ENCODE measurements at regions of chr1 and their contacts with region 1.

Region 1: DNA sequence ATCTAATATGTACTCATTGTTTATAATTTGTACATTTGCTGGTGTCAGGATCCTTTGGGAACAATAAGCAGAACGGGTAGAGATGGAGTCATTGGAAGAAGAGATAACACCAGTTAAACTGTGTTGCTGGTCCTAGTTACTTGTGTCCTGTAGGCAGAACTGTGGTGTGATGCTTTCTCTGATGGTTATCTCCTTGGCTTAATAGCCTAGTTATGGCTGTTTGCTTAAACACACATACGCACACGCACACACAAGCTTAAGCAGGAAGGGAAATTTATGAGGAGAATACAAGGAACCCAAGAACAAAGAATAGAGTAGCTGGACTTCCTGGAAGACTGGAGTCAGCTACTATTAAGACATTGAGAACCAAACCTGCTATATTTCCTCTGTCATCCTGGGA is 5.7 kb upstream of the PKN2 start:
- DNase-seq: no peak
- H3K4me3 ChIP-seq: no peak overlapping the region
- H3K27ac ChIP-seq: no peak overlapping the region
- H3K4me1 ChIP-seq: peaks cover 4 to 13% (median 10%) of the 10 kb centered on the region in 4 experiments
- H3K27me3 ChIP-seq: no peaks in the 10 kb centered on the region

Region 2: DNA sequence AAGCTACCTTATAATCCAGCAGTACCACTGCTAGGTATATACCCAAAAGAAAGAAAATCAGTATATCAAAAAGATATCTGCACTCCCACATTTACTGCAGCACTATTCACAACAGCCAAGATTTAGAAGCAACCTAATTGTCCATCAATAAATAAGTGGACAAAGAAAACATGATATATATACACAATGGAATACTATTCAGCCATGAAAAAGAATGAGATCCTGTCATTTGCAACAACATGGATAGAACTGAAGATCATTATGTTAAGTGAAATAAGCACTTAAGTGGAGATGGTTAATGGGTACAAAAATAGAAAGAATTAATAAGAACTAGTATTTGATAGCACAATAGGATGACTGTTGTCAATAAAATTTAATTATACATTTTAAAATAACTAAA is 85.0 kb before region 1 on chr1:
- CTCF ChIA-PET with region 1: no interaction called
- POLR2A ChIA-PET with region 1: no interaction called
- DNase-seq: no peak
- H3K4me3 ChIP-seq: no peak overlapping the region
- H3K27ac ChIP-seq: no peak overlapping the region
- H3K4me1 ChIP-seq: no peaks in the 10 kb centered on the region
- H3K27me3 ChIP-seq: no peaks in the 10 kb centered on the region

Region 3: DNA sequence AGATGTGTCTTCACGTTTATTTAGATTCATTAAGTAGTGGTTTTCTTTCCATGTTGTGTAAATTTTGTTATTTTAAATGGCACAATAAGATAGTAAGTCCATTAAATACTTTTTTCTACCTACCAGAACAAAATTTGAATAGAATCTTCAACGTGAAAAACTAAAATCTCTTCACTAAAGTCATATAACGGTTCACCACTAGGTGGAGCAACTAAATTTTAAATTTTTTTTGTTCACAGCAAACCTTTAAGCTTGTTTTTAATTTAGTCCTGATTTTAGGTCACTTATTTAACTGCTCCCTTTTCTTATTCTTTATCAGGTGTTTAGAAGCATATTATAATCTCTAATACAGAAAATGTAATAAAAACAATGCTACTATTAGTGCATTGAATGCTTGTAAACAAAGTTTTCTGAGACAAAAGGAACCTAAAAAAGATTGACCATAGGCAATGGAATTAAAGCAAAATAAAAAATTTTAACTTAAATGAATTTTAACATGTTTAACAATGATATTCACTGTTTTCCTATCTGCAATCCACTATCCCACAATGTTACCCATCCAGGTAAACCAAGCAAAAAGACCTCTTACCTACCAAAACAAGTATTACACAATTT is 22.6 kb before region 1 on chr1:
- CTCF ChIA-PET with region 1: interaction called, 52 read pairs
- POLR2A ChIA-PET with region 1: interaction called, 4 read pairs
- DNase-seq: peak; percentile 43 to 65 (median 59)
- H3K4me3 ChIP-seq: no peak overlapping the region
- H3K27ac ChIP-seq: no peak overlapping the region
- H3K4me1 ChIP-seq: peaks cover 0 to under 1% (median 0%) of the 10 kb centered on the region in 4 experiments
- H3K27me3 ChIP-seq: no peaks in the 10 kb centered on the region

Region 4: GRCh38 chr1:88722492-88722891 is 44.1 kb after region 1 on chr1:
- CTCF ChIA-PET with region 1: no interaction called
- POLR2A ChIA-PET with region 1: no interaction called
- DNase-seq: peak in 1 of 3 donors; percentile 61
- H3K4me3 ChIP-seq: no peak overlapping the region
- H3K27ac ChIP-seq: no peak overlapping the region
- H3K4me1 ChIP-seq: peaks cover 0 to 6% (median 3%) of the 10 kb centered on the region in 4 experiments
- H3K27me3 ChIP-seq: no peaks in the 10 kb centered on the region

Region 5: GRCh38 chr1:88990426-88990825 is 312.0 kb after region 1 on chr1:
- CTCF ChIA-PET with region 1: no interaction called
- POLR2A ChIA-PET with region 1: no interaction called
- DNase-seq: no peak
- H3K4me3 ChIP-seq: no peak overlapping the region
- H3K27ac ChIP-seq: no peak overlapping the region
- H3K4me1 ChIP-seq: peaks cover 11 to 27% (median 17%) of the 10 kb centered on the region in 4 experiments
- H3K27me3 ChIP-seq: no peaks in the 10 kb centered on the region

Measured in common myeloid progenitor, CD34-positive (primary cell).